ENCODE measurements at regions of chr19 and their contacts with region 1.

Region 1: GRCh38 chr19:48284896-48285295 is 15.0 kb downstream of the ZNF114 start:
- DNase-seq: no peak
- H3K4me3 ChIP-seq: no peak overlapping the region
- H3K27ac ChIP-seq: no peak overlapping the region
- H3K4me1 ChIP-seq: no peaks in the 10 kb centered on the region
- H3K27me3 ChIP-seq: no peaks in the 10 kb centered on the region
- CTCF ChIP-seq: no peak
- EP300 ChIP-seq: no peak
- POLR2A ChIP-seq: no peak

Region 2: GRCh38 chr19:48340995-48341394 is 56.1 kb after region 1 on chr19:
- intact Hi-C with region 1: loop called in 1 of 4 experiments (anchors 10 kb)
- DNase-seq: no peak
- H3K4me3 ChIP-seq: no peak overlapping the region
- H3K27ac ChIP-seq: no peak overlapping the region
- H3K4me1 ChIP-seq: no peaks in the 10 kb centered on the region
- H3K27me3 ChIP-seq: no peaks in the 10 kb centered on the region
- CTCF ChIP-seq: no peak
- EP300 ChIP-seq: no peak
- POLR2A ChIP-seq: no peak

Region 3: DNA sequence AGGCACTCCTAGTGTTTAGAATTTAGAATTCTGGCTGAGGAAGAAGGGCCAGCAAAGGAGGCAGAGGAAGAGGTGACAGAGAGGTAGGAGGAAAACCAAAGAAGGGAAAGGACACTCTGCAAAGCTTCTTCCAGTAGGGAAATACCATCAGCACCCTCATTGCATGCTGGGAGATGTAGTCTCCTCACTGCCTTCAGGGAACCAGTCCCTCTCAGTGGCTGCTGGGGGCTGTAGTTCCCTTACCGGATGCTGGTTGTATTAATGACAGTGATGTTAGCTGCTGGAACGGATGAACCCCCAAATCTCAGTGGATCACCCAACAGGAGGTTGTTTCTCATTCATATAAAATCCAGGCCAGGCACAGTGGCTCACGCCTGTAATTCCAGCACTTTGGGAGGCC is 118.7 kb after region 1 on chr19:
- intact Hi-C with region 1: no loop called
- DNase-seq: no peak
- H3K4me3 ChIP-seq: no peak overlapping the region
- H3K27ac ChIP-seq: no peak overlapping the region
- H3K4me1 ChIP-seq: peaks cover under 1% of the 10 kb centered on the region
- H3K27me3 ChIP-seq: no peaks in the 10 kb centered on the region
- CTCF ChIP-seq: no peak
- EP300 ChIP-seq: no peak
- POLR2A ChIP-seq: no peak